Activated T-helper 1 cell treated with anti-CD3 and anti-CD28 coated beads, Interleukin-12 subunit alpha, Interleukin-12 subunit beta, Interleukin-2, Interleukin-4 antibody, amounts not matched to agents 30 ng/mL and 10 ng/mL and 1 ng/mL, durations not matched to agents 14 hours and 24 hours and 36 hours (primary cell): ENCODE measurements at regions of chr17 and their contacts with region 1.

Region 1: GRCh38 chr17:19362277-19363113 is at the start of gene B9D1:
- DNase-seq: peak; percentile 85
- H3K4me3 Mint-ChIP-seq: peak within 1 kb of the TSS; percentile 87
- H3K27ac Mint-ChIP-seq: peak within 1 kb of the TSS; percentile 67
- H3K4me1 Mint-ChIP-seq: peaks cover 7% of the 10 kb centered on the region
- H3K27me3 Mint-ChIP-seq: peaks cover 16% of the 10 kb centered on the region
- total RNA-seq, gene B9D1: 4.3 and 5.6 TPM in 2 replicates

Region 2: DNA sequence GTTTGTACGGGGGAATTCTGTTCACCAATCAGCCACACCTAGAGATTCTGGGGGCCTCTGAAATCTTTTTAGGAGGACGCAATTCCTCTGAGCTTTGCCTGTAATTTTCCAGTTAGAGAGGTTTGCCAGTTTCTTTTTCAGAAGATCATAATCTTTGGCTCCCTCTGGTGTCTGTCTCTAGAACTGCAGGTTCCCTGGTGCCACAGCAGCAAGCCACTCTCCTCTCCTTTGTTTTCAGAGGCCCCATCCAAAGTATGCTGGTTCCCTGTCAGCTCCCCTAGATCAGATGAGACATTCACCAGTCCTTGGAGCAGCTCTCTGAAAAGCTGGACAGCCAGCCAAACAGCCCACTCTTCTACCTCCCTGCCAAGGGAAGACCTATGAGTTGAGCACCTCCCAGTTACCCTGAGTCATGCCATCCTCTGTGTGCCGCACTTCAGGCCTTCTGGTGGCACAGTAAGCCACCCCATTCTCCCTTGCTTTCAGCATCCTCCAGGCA is 84.6 kb after region 1 on chr17:
- intact Hi-C with region 1: loop called (anchors 1 kb)
- DNase-seq: peak; percentile 50
- H3K4me3 Mint-ChIP-seq: no peak overlapping the region
- H3K27ac Mint-ChIP-seq: no peak overlapping the region
- H3K4me1 Mint-ChIP-seq: peaks cover 5% of the 10 kb centered on the region
- H3K27me3 Mint-ChIP-seq: peaks cover 23% of the 10 kb centered on the region

Region 3: DNA sequence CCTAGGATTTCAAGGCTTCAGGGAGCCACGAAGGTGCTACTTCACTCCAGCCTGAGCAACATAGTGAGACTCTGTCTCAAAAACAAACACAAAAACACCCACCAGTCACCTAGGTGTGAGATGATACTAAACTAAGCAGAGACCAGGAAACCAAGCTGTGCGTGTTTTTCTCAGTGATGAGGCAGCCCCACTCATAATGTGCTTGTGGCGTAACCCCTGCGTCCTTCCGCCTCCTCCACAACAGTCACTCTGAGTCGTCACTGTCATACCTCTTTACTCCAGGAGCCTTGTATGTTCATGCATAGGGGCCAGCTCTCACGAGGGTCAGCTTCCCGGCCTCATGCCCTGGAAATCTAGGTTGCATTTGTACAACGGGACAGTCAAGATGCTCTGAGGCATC is 140.0 kb after region 1 on chr17:
- intact Hi-C with region 1: loop called (anchors 2 kb)
- DNase-seq: peak; percentile 34
- H3K4me3 Mint-ChIP-seq: no peak overlapping the region
- H3K27ac Mint-ChIP-seq: peak overlapping the region; percentile 70
- H3K4me1 Mint-ChIP-seq: peaks cover 5% of the 10 kb centered on the region
- H3K27me3 Mint-ChIP-seq: peaks cover 19% of the 10 kb centered on the region